ENCODE measurements at regions of chr17 and their contacts with region 1.

Region 1: DNA sequence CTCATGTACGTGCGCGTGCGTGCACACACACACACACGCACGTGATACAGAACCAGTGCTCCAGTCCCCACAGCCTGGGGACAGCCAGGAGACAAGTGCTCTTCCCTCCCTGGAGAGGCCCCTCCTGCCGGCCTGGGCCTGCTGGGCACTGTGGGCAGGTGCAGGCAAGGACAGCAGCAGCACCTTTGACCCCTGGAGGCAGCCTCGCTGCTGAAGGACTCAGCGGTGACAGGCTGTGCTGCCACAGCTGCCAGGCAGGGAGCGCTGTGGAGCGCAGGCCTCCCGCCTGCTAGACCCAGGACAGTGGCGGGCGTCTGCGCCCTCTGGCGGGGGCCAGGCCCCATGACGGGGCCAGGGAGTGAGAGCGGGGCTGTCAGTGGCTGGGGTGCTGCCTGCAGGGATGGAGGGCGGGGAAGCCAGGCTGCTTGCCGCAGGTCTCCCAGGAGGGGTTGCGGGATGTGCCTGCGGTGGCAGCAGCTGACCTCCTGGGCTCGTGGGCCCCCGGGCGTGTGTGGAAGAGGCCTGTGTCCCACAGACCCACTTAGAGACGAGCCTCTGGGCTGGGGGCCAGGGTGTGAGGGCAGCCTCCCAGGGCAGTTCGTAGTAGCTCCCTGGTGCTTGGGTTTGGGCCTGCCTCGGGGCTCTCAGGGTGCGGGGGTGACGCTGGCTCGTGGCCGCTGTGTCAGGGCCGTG is 63.5 kb upstream of the PVALEF start:
- DNase-seq: peak; percentile 89
- H3K4me3 Mint-ChIP-seq: no peak overlapping the region
- H3K27ac Mint-ChIP-seq: no peak overlapping the region
- H3K4me1 Mint-ChIP-seq: peaks cover 6% of the 10 kb centered on the region
- H3K27me3 Mint-ChIP-seq: no peaks in the 10 kb centered on the region

Region 2: GRCh38 chr17:80913928-80914821 is 187.6 kb before region 1 on chr17:
- CTCF ChIA-PET with region 1: no interaction called
- intact Hi-C with region 1: no loop called
- DNase-seq: no peak
- H3K4me3 Mint-ChIP-seq: no peak overlapping the region
- H3K27ac Mint-ChIP-seq: no peak overlapping the region
- H3K4me1 Mint-ChIP-seq: no peaks in the 10 kb centered on the region
- H3K27me3 Mint-ChIP-seq: no peaks in the 10 kb centered on the region

Region 3: GRCh38 chr17:81018044-81018802 is 83.5 kb before region 1 on chr17:
- CTCF ChIA-PET with region 1: interaction called, 21 read pairs
- intact Hi-C with region 1: loop called (anchors 1 kb)
- DNase-seq: peak; percentile 60
- H3K4me3 Mint-ChIP-seq: peak overlapping the region; percentile 60
- H3K27ac Mint-ChIP-seq: peak overlapping the region; percentile 75
- H3K4me1 Mint-ChIP-seq: peaks cover 12% of the 10 kb centered on the region
- H3K27me3 Mint-ChIP-seq: no peaks in the 10 kb centered on the region

Measured in activated naive CD4-positive, alpha-beta T cell treated with anti-CD3 and anti-CD28 coated beads for 36 hours (primary cell).